ENCODE measurements at regions of chr6 and their contacts with region 1.

Region 1: GRCh38 chr6:20401205-20402091 is at the start of gene E2F3:
- DNase-seq: peak; percentile 99
- H3K4me3 Mint-ChIP-seq: peak within 1 kb of the TSS; percentile 99
- H3K27ac Mint-ChIP-seq: peak within 1 kb of the TSS; percentile 97
- H3K4me1 Mint-ChIP-seq: peaks cover 42% of the 10 kb centered on the region
- H3K27me3 Mint-ChIP-seq: peaks cover 2% of the 10 kb centered on the region
- total RNA-seq, gene E2F3: 30.3 and 30.5 TPM in 2 replicates

Region 2: DNA sequence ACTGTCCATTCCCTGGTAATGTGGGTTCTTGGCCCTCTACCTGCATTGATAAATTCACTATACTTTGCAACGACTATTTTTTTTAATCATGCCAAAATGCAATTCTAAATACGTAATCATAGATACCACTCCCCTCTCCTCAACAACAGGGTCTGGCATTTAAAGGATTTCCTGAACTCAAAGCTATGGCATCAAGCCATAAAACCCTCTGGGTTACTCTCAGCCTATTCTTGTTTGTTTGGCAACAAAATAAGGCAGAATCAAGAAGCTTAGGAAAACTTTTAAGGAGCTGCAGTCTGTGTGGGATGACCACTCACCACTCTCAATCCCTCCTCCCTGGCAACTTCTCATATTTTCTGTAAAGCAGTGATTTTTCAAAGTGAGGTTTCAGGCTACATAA is 1234.2 kb before region 1 on chr6:
- intact Hi-C with region 1: no loop called
- DNase-seq: no peak
- H3K4me3 Mint-ChIP-seq: no peak overlapping the region
- H3K27ac Mint-ChIP-seq: no peak overlapping the region
- H3K4me1 Mint-ChIP-seq: no peaks in the 10 kb centered on the region
- H3K27me3 Mint-ChIP-seq: no peaks in the 10 kb centered on the region

Region 3: GRCh38 chr6:20202324-20202658 is 199.2 kb before region 1 on chr6:
- intact Hi-C with region 1: loop called (anchors 1 kb)
- DNase-seq: no peak
- H3K4me3 Mint-ChIP-seq: no peak overlapping the region
- H3K27ac Mint-ChIP-seq: peak overlapping the region; percentile 30
- H3K4me1 Mint-ChIP-seq: peaks cover 77% of the 10 kb centered on the region
- H3K27me3 Mint-ChIP-seq: no peaks in the 10 kb centered on the region

Region 4: GRCh38 chr6:20291764-20292580 is 109.5 kb before region 1 on chr6:
- intact Hi-C with region 1: loop called (anchors 1 kb)
- DNase-seq: peak; percentile 60
- H3K4me3 Mint-ChIP-seq: no peak overlapping the region
- H3K27ac Mint-ChIP-seq: no peak overlapping the region
- H3K4me1 Mint-ChIP-seq: peaks cover 41% of the 10 kb centered on the region
- H3K27me3 Mint-ChIP-seq: peaks cover 3% of the 10 kb centered on the region

Region 5: DNA sequence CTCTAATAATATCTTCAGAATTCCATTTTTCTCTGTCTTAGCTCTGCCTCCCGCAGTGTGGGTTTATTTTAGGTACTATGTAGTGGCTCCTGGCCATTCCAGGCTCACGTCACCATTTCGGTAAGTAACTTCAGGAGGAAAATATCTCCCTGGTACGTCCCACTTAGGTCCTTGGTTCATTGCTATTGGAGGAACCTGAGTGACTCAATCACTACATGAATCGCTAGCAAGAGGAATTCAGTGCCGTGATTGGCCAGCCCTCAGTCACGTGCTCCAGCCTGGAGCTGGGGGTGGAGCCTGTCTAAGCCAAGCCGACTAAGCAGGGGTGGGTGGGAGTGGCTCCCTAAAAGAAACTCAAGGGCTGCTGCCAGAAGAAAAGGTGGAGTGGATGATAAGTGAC is 67.1 kb before region 1 on chr6:
- intact Hi-C with region 1: loop called (anchors 2 kb)
- DNase-seq: no peak
- H3K4me3 Mint-ChIP-seq: no peak overlapping the region
- H3K27ac Mint-ChIP-seq: no peak overlapping the region
- H3K4me1 Mint-ChIP-seq: peaks cover 35% of the 10 kb centered on the region
- H3K27me3 Mint-ChIP-seq: peaks cover 5% of the 10 kb centered on the region

Region 6: DNA sequence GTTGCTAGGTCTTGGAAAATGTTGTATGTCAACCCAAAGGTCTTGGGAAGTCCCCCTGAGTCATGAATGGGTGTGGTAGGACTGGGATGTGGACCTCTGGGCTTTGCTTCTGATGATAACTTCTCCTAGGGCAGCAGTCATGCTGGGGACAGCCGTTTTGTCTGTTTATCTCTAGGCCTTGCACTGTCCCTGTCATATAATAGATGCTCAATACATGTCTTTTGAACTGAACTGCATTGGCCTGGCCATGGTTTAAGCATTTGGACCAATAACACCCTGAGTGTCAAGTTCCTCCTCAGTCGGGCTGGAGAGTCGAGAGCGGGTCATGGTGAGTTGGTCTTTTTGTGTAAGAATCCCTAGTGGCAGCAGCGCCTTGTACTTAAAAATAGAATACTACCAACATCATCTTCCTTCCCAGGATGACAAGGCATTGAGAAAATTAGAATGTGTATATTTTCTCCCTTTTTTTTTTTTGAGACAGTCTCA is 43.4 kb after region 1 on chr6:
- intact Hi-C with region 1: loop called (anchors 5 kb)
- DNase-seq: no peak
- H3K4me3 Mint-ChIP-seq: no peak overlapping the region
- H3K27ac Mint-ChIP-seq: peak overlapping the region; percentile 72
- H3K4me1 Mint-ChIP-seq: peaks cover 27% of the 10 kb centered on the region
- H3K27me3 Mint-ChIP-seq: no peaks in the 10 kb centered on the region

Region 7: DNA sequence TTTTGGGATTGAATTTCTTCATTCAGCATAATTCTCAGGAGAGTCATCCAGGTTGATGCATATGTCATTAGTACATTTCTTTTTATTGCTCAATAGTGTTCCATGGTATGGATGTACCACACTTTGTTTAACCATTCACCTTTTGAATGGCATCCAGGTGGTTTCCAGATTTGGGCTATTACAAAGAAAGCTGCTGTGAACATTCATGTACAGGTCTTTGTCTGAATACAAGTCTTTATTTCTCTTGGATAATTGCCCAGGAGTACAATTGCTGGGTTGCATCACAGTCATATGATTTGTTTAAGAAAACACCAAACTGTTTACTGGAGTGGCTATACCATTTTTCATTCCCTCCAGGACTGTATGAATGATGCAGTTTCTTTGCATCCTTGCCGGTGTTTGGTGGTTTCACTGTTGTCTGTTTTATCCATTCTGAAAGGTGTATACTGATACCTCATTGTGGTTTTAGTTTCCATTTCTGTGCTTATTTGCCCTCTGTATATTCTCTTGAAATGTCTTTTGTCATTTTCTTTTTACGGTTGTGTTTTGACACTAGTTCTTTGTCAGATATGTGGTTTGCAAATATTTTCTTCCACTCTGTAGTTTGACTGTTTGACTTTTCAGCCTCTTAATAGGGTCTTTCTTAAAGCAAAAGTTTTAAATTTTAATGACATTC is 141.6 kb after region 1 on chr6:
- intact Hi-C with region 1: loop called (anchors 1 kb)
- DNase-seq: peak; percentile 35
- H3K4me3 Mint-ChIP-seq: peak overlapping the region; percentile 66
- H3K27ac Mint-ChIP-seq: peak overlapping the region; percentile 91
- H3K4me1 Mint-ChIP-seq: peaks cover 50% of the 10 kb centered on the region
- H3K27me3 Mint-ChIP-seq: no peaks in the 10 kb centered on the region